ENCODE measurements at regions of chr19 and their contacts with region 1.

Region 1: DNA sequence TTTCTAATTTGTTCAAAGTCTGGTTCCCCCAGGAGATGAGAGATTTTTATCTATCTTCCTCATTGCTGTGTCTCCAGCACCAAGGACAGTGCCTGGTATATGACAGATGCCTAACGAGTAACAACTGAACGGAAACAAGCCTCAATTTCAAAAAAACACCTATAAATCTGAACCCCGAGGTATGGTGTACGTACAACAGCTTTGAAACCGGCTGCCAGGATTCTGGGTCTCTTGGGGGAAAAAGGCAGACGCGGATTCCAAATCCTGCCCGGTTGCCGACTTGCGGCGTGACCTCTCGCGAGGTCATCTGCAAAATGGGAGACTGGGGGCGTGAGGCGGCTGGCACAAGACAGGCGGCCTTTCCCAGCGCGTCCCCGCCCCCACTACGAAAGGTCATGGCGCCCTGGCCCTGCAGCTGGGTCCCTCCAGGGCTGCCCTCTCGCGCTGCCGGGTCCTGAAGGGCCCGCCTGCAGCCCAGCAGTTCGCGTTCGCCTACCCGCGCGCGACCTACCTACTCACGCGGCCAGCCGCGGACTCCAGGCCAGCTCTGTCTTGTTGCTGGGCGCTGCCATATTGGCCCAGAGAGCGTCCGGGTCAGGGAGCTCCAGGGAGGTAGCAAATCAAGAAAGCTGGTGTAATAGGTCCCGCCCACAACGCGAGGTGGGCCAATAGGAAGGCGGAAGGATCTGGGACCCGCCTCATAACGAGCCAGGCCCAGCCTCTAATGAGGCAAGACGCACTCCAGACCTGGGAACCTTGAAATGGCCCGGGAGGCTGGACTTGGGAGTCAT is at the start of gene ECSIT:
- DNase-seq: peak; percentile 90
- ATAC-seq: peak; percentile 100
- H3K4me3 ChIP-seq: peak within 1 kb of the TSS; percentile 96
- H3K27ac ChIP-seq: peak within 1 kb of the TSS; percentile 88
- H3K4me1 ChIP-seq: no peaks in the 10 kb centered on the region
- H3K27me3 ChIP-seq: no peaks in the 10 kb centered on the region
- CTCF ChIP-seq: no peak
- EP300 ChIP-seq: no peak
- POLR2A ChIP-seq: peak; percentile 87
- RAD21 ChIP-seq: no peak
- polyA plus RNA-seq, gene ECSIT: 1.0 to 4.9 TPM

Region 2: GRCh38 chr19:11505032-11505503 is 23.7 kb before region 1 on chr19:
- CTCF ChIA-PET with region 1: interaction called, 3 read pairs
- POLR2A ChIA-PET with region 1: no interaction called
- RAD21 ChIA-PET with region 1: no interaction called
- SMC1A ChIA-PET with region 1: no interaction called
- in situ Hi-C with region 1: no loop called
- intact Hi-C with region 1: loop called (anchors 1 kb)
- DNase-seq: peak; percentile 89
- ATAC-seq: peak; percentile 96
- H3K4me3 ChIP-seq: peak overlapping the region; percentile 83
- H3K27ac ChIP-seq: peak overlapping the region; percentile 70
- H3K4me1 ChIP-seq: no peaks in the 10 kb centered on the region
- H3K27me3 ChIP-seq: no peaks in the 10 kb centered on the region
- CTCF ChIP-seq: no peak
- EP300 ChIP-seq: no peak
- POLR2A ChIP-seq: no peak
- RAD21 ChIP-seq: no peak